Activated naive CD4-positive, alpha-beta T cell treated with anti-CD3 and anti-CD28 coated beads for 36 hours (primary cell): ENCODE measurements at regions of chr17 and their contacts with region 1.

Region 1: GRCh38 chr17:42019509-42020404 is at the start of gene NKIRAS2:
- DNase-seq: peak; percentile 96
- H3K4me3 Mint-ChIP-seq: peak within 1 kb of the TSS; percentile 91
- H3K27ac Mint-ChIP-seq: peak within 1 kb of the TSS; percentile 78
- H3K4me1 Mint-ChIP-seq: peaks cover 58% of the 10 kb centered on the region
- H3K27me3 Mint-ChIP-seq: no peaks in the 10 kb centered on the region
- total RNA-seq, gene NKIRAS2: 12.4 to 13.2 TPM

Region 2: DNA sequence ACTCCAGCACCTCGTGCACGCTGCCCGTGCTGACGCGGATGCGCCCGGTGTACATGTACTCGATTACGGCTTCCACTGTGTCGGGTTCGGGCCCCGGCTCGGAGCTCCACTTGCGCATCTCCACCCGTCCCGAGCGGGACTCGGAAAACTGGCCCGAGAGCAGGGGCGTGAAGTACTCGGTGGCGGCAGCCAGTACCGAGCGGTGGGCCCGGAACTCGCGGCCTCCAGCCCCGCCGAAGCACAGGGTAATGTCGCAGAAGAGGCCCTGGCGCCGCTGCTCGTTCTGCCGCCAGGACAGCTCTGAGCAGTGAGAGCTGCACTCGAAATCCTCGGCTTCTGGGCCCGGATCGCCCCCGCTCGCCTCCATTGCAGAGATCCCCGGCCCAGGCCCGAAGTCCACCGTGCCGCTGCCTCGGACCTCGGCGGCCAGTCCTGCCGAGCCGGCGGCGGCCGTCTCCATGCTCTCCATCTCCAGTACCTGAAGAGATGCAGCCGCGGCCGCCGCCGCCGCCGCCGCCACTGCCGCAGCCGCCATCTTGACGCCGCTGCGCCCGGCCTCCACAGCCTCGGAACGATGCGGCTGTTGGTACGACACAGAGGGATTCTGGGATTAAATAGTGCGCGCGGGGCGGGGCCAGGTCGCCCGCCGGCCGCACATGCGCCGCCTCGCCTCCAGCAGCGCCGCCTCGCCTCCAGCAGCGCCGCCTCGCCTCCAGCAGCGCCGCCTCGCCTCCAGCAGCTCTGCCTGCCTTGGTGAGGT is 154.7 kb before region 1 on chr17 and contains the start of gene KLHL11:
- CTCF ChIA-PET with region 1: no interaction called
- intact Hi-C with region 1: loop called (anchors 1 kb)
- DNase-seq: peak; percentile 92
- H3K4me3 Mint-ChIP-seq: no peak within 1 kb of the TSS
- H3K27ac Mint-ChIP-seq: peak within 1 kb of the TSS; percentile 47
- H3K4me1 Mint-ChIP-seq: peaks cover 29% of the 10 kb centered on the region
- H3K27me3 Mint-ChIP-seq: no peaks in the 10 kb centered on the region
- total RNA-seq, gene KLHL11: 8.9 to 9.6 TPM

Region 3: GRCh38 chr17:41944943-41945342 is 74.8 kb before region 1 on chr17:
- CTCF ChIA-PET with region 1: no interaction called
- intact Hi-C with region 1: no loop called
- DNase-seq: no peak
- H3K4me3 Mint-ChIP-seq: no peak overlapping the region
- H3K27ac Mint-ChIP-seq: no peak overlapping the region
- H3K4me1 Mint-ChIP-seq: no peaks in the 10 kb centered on the region
- H3K27me3 Mint-ChIP-seq: no peaks in the 10 kb centered on the region

Region 4: GRCh38 chr17:41966463-41967140 is 53.2 kb before region 1 on chr17 and contains the start of gene CNP:
- CTCF ChIA-PET with region 1: interaction called, 117 read pairs
- intact Hi-C with region 1: loop called (anchors 1 kb)
- DNase-seq: peak; percentile 88
- H3K4me3 Mint-ChIP-seq: peak within 1 kb of the TSS; percentile 80
- H3K27ac Mint-ChIP-seq: peak within 1 kb of the TSS; percentile 86
- H3K4me1 Mint-ChIP-seq: peaks cover 38% of the 10 kb centered on the region
- H3K27me3 Mint-ChIP-seq: no peaks in the 10 kb centered on the region
- total RNA-seq, gene CNP: 58.4 to 59.1 TPM

Region 5: DNA sequence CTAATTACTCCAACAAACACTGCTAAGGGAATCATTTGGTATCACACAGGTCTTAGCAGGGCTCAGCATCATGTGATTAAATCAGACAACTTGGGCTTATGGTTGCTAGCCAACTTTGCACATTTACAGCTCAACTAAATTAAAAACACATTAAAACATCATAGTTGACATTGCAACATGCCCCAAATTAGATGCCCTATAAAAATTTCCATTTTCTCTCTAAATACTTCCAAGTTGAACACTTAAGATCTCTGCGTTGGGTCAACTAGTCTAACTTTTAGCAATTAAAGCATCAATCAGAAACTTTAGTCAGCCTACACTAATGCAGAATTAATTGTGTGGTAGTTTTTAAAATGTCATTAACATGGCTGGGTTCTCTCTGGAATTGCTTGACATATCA is 14.6 kb before region 1 on chr17:
- CTCF ChIA-PET with region 1: interaction called, 11 read pairs
- intact Hi-C with region 1: no loop called
- DNase-seq: no peak
- H3K4me3 Mint-ChIP-seq: no peak overlapping the region
- H3K27ac Mint-ChIP-seq: no peak overlapping the region
- H3K4me1 Mint-ChIP-seq: peaks cover 40% of the 10 kb centered on the region
- H3K27me3 Mint-ChIP-seq: no peaks in the 10 kb centered on the region

Region 6: GRCh38 chr17:42101513-42102319 is 82.0 kb after region 1 on chr17:
- CTCF ChIA-PET with region 1: interaction called, 10 read pairs
- intact Hi-C with region 1: no loop called
- DNase-seq: peak; percentile 83
- H3K4me3 Mint-ChIP-seq: no peak overlapping the region
- H3K27ac Mint-ChIP-seq: no peak overlapping the region
- H3K4me1 Mint-ChIP-seq: peaks cover 10% of the 10 kb centered on the region
- H3K27me3 Mint-ChIP-seq: peaks cover 12% of the 10 kb centered on the region

Region 7: DNA sequence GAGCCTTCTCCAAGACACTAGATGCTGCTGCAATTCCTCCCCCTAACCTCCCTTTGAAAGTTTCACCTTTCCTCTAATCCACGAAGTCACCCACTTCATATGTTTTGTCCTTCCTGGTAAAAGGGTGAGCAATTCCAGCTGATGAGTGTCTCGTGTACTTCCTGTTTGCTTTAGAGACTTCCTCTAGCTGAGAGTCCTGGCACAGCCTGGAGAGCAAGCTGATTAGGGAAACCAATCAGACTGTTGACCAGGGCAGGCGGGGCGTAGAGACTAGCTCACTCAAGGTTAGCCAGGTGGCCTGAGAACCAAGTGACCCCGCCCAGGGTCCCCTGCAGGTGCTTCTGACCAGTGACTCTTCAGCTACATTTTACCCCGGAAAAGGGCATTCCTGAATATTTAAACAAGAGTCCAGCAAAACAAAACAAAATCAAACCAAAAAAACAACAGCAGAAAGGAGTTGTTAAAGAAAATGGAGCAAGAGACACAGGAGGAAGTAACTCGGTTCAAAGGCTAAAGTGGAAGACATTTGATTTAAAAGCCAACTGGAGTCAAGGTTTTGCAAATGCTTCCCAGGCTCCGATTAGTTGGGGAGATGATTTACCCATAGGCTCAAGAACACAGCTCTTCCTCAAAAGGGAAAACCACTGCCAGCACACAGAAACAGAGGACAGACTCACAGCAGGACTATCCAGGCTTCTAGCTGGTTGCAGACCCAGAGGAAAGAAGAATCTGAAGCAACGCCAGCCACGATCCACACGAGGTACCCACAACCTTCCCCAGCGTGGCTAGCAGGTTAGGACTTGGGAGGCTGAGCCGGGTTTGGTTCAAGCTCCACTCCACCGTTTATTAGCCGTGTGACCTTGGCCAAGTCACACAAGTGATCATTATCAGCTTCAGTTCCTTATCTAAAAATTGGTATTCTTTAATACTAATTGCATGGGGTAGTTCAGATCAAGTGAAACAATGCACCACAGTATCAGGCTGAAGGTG is 116.2 kb after region 1 on chr17:
- CTCF ChIA-PET with region 1: no interaction called
- intact Hi-C with region 1: no loop called
- DNase-seq: no peak
- H3K4me3 Mint-ChIP-seq: no peak overlapping the region
- H3K27ac Mint-ChIP-seq: peak overlapping the region; percentile 25
- H3K4me1 Mint-ChIP-seq: peaks cover 71% of the 10 kb centered on the region
- H3K27me3 Mint-ChIP-seq: no peaks in the 10 kb centered on the region

Region 8: DNA sequence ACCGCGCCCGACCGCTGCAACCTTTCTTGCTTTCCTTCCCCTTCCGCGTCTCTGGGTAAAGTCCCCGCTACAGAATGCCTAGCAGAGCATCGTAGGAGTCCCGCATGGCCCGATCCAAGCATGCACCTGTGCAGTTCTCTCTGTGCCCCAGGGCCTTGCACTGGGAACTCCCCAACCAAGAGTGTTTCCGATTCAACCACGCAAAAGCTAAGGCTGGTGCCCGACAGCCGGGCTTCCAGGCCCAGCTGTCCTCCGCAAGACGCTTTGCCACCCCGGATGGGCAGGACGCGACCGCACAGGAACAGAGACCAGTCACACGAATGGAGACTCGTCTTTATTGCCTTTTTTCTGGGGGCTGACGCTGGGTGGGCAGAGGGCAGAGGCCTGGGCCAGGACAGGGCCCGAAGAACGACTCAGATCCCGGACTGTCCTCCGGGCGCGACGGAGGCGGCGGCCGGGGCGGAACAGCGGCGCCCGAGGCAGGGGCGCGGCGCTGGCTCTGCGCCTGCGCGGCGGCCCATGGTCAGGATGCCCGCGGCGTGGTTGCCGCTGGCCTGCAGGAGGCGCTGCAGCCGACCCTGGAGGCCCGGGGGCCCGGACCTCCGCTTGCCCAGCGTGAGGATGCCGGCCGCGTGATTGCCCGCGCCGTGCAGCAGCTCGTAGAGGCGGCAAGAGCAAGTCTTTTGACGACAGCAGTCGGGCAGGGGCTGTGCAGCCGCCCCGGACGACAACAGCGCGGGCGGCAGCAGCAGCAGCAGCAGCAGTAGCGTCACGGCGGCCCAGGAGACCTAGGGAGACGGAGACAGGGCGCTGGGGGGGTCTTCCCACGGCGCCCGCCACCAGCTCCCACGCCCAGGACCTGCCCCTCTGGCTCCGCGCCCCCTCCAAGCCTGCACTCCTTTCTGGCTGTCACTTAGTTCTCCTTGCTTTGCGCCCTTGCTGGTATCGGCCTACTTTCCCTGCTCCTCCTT is 164.3 kb after region 1 on chr17:
- CTCF ChIA-PET with region 1: interaction called, 6 read pairs
- intact Hi-C with region 1: loop called (anchors 2 kb)
- DNase-seq: peak; percentile 77
- H3K4me3 Mint-ChIP-seq: peak overlapping the region; percentile 86
- H3K27ac Mint-ChIP-seq: peak overlapping the region; percentile 70
- H3K4me1 Mint-ChIP-seq: peaks cover 45% of the 10 kb centered on the region
- H3K27me3 Mint-ChIP-seq: peaks cover 22% of the 10 kb centered on the region

Region 9: DNA sequence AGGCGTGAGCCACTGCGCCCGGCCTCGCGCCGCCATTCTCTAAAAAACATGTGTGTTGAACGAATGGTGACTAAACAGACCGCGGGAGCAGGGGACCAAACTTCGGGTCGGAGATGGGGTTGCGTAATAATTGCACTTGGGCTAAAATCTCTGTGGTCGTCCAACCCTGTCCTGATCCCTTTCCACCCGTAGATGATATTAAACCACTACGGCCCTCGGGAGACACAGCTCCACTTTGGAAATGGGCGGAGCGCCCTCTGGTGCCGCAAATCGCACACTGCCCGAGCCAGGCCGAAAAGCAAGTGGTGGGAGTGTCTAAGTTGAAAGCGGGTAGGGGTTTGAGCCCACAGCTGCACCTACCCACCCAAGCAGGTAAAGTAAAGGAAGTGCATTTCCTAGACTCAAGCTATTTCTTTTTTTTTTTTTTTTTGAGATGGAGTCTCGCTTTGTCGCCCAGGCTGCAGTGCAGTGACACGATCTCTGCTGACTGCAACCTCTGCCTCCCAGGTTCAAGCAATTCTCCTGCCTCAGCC is 386.3 kb after region 1 on chr17:
- CTCF ChIA-PET with region 1: interaction called, 3 read pairs
- intact Hi-C with region 1: loop called (anchors 1 kb)
- DNase-seq: peak; percentile 90
- H3K4me3 Mint-ChIP-seq: no peak overlapping the region
- H3K27ac Mint-ChIP-seq: no peak overlapping the region
- H3K4me1 Mint-ChIP-seq: peaks cover 22% of the 10 kb centered on the region
- H3K27me3 Mint-ChIP-seq: no peaks in the 10 kb centered on the region